ENCODE measurements at regions of chr2 and their contacts with region 1.

Region 1: DNA sequence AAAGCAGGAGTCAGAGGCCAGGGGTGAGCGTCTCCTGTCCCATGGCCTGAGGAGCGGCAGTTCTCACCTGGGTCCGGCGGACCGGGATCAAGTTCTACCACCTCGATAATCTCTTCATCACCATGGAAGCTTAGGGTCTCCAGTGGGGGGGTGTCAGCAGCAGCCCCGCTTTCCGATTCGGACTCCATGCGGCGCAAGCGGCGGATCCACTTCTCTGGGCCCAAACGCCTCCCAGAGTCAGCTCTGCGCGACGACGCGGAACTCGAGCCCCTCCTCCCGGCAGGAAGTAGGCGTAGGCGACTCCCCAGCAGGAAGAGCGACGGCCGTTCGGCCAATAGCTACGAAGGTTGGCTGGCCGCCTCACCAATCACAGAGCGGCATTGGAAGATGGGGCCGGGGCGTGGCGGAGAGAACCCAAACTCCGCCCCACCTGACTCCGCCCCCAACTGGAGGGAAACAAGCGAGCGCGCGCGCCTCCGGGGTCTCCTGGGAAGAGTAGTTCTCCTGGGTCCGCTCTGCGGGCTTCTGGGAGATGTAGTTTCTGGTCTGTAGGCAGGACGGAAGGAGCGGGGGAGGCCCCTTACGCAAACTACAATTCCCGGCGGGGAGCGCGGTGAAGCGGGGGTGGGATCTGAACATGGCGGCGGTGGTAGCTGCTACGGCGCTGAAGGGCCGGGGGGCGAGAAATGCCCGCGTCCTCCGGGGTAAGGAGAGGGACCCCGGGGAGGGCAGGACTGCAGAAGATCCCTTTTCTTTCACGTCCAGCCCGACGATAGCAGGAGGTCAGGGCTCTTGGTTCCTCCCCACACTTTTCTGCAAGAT is at the starts of genes AAMP and PNKD:
- DNase-seq: peak; percentile 94
- H3K4me3 ChIP-seq: peak within 1 kb of the TSS; percentile 97
- CTCF ChIP-seq: peak; percentile 18

Region 2: DNA sequence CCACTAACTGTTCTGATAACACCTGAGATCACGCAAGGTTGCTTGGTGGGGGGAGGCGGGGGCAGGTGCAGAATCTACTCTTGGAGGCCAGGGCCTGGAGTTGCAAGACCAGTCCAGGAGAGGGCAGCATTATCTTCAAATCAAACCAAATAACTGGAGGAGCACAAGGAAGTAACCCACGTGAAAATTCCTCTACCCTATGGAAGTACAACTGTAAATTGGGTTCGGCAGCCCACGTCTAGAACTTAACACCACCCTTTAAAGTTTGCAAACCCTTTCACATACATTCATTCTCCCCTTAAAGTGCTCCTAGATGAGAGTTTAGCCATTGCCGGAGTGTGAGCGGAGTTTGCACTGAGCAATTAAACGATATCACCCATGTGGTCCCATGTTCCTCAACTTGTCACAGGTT is 83.7 kb before region 1 on chr2:
- CTCF ChIA-PET with region 1: interaction called, 36 read pairs
- POLR2A ChIA-PET with region 1: no interaction called
- DNase-seq: peak; percentile 12
- H3K4me3 ChIP-seq: no peak overlapping the region
- CTCF ChIP-seq: peak; percentile 76

Region 3: DNA sequence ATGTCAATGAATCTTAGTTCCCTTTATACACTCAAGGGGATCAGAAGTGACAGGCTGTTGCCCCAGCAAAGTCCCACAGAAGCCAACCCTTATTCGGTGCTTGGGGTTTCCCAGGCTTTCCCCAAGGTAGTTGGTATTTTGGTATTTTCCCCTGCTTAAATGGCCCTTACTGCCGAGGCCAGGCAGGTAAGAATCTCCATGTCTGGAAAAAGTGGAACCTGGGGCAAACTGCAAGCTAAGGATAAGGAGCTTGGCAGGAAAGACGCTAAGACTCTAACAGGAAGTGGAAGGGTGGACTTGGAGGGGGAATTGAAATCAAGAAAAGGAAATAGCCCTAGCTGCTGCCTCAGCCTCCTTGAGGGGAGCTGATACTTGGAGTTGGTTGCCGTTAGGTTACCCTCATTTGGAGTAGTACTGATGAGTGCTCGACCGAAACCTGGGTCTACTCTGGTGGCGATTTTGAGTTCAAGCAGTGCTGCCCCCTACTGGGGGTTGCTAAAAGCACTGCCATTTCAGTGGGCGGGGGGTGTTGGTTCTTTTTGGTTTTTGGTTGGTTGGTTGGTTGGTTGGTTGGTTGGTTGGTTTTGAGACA is 12.6 kb before region 1 on chr2:
- CTCF ChIA-PET with region 1: interaction called, 18 read pairs
- POLR2A ChIA-PET with region 1: interaction called, 5 read pairs
- DNase-seq: no peak
- H3K4me3 ChIP-seq: no peak overlapping the region
- CTCF ChIP-seq: peak; percentile 52

Region 4: DNA sequence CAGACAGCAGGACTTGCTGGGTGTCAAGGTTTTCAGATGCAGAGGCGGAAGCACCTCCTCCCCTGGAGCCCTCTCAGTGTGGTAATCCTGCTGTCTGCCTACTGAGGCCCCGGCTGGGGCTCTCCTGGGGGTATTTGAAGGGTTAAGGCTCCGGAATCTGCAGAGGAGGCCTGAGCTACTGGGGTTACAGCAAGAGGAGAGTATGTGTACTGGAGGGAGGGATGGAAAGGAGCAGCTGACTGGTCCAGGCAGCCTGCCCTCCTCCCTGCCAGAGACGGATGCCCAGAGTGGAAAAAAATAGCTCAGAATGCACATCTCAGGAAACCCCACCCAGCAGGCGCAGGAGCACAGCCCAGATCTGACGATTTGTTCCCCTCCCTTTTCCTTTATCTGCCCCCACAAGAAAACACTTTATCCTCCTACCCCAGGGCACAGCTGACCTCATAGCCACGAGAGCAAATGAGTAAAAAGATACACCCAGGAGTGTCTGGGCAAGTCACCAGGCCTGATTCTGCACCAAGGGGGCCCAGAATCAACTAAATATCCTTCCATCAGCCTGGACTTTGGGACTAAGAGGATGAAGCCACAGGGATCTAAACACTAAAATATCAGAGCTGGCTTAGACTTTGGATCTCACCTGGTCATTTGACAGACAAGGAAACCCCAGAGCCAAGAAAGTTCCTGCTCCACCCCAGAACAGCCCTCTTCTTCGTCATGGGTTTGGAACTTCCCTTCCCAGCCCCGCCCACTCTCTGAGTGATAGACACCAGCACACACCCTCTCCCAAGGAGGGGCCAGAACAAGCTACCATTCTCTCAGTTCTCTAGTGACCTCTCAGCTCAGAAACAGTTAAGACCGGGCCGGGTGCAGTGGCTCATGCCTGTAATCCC is 16.7 kb after region 1 on chr2:
- CTCF ChIA-PET with region 1: interaction called, 193 read pairs
- POLR2A ChIA-PET with region 1: interaction called, 20 read pairs
- DNase-seq: peak; percentile 90
- H3K4me3 ChIP-seq: peak overlapping the region; percentile 56
- CTCF ChIP-seq: no peak

Region 5: GRCh38 chr2:218292048-218293014 is 22.2 kb after region 1 on chr2 and contains the start of gene TMBIM1:
- CTCF ChIA-PET with region 1: interaction called, 193 read pairs
- POLR2A ChIA-PET with region 1: interaction called, 20 read pairs
- DNase-seq: no peak
- H3K4me3 ChIP-seq: peak within 1 kb of the TSS; percentile 85
- CTCF ChIP-seq: peak; percentile 64